ENCODE measurements at regions of chr12 and their contacts with region 1.

Region 1: GRCh38 chr12:109264095-109264942 is 44.8 kb downstream of the FOXN4 start:
- DNase-seq: peak; percentile 28
- ATAC-seq: peak; percentile 97
- H3K4me3 ChIP-seq: peak overlapping the region in 1 of 2 experiments; percentile 13; a peak in 1 of 4 replicates
- H3K27ac ChIP-seq: no peak overlapping the region
- H3K4me1 ChIP-seq: 0 out of 2 replicates have a peak, but pooled peaks cover 6% of the 10 kb centered on the region
- H3K27me3 ChIP-seq: no peaks in the 10 kb centered on the region
- CTCF ChIP-seq: peak; percentile 96

Region 2: DNA sequence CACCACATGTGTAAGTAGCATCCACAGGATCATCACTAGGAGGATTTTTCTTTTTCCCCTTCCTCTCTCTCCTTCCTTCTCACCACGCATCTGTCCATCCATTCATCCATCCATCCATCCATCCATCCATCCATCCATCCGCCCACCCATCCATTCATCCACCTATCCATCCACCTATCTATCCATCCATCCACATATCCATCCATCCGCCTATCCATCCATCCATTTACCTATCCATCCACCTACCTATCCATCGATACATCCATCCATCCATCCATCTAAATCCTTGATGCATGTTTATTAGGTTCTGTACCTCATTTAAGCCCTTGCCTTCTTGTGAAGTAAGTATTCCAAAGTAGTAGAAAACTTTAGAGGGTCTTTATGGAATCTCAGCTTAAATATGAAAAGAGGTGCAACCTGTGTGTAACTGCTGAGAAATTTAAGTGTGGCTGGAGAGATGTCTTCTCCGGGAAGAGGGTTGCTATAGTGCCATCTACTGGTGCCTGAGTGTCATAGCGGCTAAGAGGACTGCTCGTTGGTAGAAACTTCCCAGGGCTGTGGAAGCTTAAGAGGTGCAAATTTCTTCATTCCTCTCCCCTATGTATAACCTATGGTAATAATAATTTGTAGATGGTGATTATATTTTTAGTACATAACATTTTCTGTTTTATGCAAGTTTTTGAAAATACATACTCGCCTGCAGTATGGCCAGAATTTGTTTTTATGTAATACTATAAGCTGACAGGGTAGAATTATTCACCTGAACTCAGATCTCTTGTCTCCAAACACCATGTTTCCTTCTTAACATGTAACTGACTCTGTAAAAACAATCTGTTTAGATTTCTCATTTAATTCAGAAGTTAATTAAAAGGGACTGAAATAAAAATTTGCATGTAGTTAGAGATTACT is 129.4 kb after region 1 on chr12:
- CTCF ChIA-PET with region 1: interaction called, 12 read pairs
- POLR2A ChIA-PET with region 1: no interaction called
- in situ Hi-C with region 1: no loop called
- intact Hi-C with region 1: no loop called
- DNase-seq: peak; percentile 53
- ATAC-seq: peak; percentile 82
- H3K4me3 ChIP-seq: no peak overlapping the region
- H3K27ac ChIP-seq: no peak overlapping the region
- H3K4me1 ChIP-seq: no peaks in the 10 kb centered on the region
- H3K27me3 ChIP-seq: no peaks in the 10 kb centered on the region; the same call in 1 of the 2 replicates
- CTCF ChIP-seq: peak; percentile 95

Region 3: GRCh38 chr12:109547286-109547685 is 283.0 kb after region 1 on chr12:
- CTCF ChIA-PET with region 1: interaction called, 11 read pairs
- POLR2A ChIA-PET with region 1: no interaction called
- in situ Hi-C with region 1: no loop called
- intact Hi-C with region 1: no loop called
- DNase-seq: no peak
- ATAC-seq: no peak
- H3K4me3 ChIP-seq: no peak overlapping the region
- H3K27ac ChIP-seq: no peak overlapping the region
- H3K4me1 ChIP-seq: no peaks in the 10 kb centered on the region
- H3K27me3 ChIP-seq: peaks cover 14% of the 10 kb centered on the region
- CTCF ChIP-seq: no peak